ENCODE measurements at regions of chr1 and their contacts with region 1.

Region 1: DNA sequence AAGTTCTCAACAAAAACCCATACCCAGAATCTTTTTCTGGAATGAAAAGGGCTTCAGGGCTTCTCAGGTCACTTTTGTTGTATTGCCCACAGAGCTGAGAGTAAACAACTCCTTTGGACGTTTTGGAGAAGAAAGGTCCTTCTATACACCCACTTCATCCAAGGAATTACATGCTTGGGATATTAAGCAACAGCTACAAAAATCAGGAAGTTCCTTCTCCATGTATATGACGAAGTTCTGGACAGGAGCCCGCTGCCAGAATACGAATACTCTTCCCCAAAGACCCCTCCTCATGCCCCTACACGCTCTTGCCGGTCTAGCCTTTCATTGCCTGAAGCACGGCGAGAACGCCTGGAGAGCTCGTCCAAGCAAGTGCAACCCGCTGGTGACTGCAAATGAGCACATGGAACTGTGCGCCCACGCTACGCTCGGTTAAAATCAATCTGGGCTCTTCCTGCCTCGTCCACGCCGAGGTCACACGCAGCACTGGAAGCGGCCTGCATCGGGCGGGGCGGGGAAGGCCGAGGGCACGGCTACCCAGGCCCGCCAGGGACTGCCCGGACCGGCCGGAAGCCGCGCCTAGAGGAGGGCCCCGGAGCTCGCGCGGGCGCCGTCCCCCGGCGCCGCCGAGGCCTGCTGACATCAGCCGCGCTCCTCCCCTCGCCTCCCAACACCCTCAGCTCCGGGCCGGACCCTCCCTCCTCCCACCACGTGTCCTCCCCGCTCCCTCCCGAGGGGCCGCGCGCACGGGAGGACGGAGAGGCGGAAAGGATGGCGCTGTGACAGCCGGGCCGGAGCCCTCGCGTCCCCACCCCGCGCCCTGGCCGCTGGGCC is at the start of gene POGK:
- DNase-seq: peak; percentile 94
- total RNA-seq, gene POGK: 18.5 TPM

Region 2: DNA sequence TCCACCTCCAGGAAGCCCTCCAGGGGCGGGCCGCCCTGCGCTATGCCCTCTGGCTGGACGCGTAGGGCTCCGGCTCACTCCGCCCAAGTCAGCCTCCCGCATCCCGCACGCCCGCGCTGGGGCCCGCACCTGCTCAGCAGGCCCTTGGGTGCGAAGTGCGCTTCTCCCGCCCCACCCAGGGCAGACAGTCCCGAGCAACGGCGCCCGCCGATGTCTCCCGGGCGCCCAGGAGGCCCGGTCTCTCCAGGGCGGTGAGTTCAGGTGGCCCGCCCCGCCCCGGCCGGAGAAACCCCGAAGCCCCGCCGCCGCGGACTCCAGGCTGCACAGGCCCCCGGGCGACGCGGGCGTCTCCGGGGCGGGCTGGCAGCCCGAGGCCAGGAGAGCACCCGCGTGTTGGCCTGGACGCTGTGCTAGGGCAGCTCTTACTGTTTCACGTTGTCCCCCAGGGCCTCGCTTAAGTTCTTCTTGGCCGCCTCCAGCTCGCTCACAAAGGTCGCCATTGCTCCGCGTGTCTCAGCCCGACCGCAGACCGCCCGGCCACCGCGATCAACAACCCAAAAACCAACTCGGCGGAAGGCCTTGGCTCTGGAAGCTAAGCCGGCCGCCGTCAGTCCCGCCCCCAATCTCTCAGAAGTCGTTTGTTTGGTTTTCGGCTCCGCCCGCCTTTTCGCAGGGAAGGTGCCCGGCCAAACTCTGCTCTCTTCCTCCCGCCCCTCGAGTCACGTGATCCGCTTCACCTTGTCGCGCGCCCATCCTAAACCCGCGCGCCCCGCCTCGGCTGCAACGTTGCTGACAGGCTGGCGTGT is 37.0 kb after region 1 on chr1 and contains the start of gene TADA1:
- intact Hi-C with region 1: loop called (anchors 1 kb)
- DNase-seq: peak; percentile 99
- total RNA-seq, gene TADA1: 11.0 TPM

Region 3: DNA sequence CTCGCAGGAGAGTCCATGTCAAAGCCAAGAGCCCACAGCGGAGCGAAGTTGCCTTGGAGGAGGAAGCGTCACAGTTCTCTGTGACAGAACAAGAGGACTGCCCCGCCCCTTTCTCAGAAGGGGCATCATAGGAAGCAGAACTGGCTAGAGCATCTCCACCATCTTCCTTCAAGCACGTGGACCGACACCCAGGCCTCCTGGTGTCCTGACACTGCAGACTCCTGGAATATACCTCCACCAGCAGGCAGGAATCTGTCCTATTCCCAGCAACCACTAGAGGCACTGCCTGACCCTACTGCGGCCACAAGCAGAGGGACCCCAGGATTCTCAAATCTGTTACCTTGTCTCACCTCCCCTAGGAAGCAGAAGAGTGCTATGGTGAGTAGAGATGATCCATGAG is 213.4 kb after region 1 on chr1:
- intact Hi-C with region 1: no loop called
- DNase-seq: no peak

Measured in cardiac septum (tissue), 1 donor.